Panc1 (cell line): ENCODE measurements at regions of chr10 and their contacts with region 1.

Region 1: GRCh38 chr10:21525367-21526183 is at the start of gene SKIDA1:
- DNase-seq: no peak
- ATAC-seq: peak; percentile 77
- H3K4me3 ChIP-seq: peak within 1 kb of the TSS; percentile 48 to 78
- H3K27ac ChIP-seq: peak within 1 kb of the TSS; percentile 97
- H3K4me1 ChIP-seq: peaks cover 44% of the 10 kb centered on the region
- H3K27me3 ChIP-seq: no peaks in the 10 kb centered on the region
- CTCF ChIP-seq: no peak
- total RNA-seq, gene SKIDA1: 9.3 TPM

Region 2: GRCh38 chr10:21030091-21030490 is 495.5 kb before region 1 on chr10:
- CTCF ChIA-PET with region 1: no interaction called
- POLR2A ChIA-PET with region 1: interaction called, 17 read pairs
- in situ Hi-C with region 1: no loop called
- intact Hi-C with region 1: no loop called
- DNase-seq: no peak
- ATAC-seq: no peak
- H3K4me3 ChIP-seq: no peak overlapping the region
- H3K27ac ChIP-seq: no peak overlapping the region
- H3K4me1 ChIP-seq: no peaks in the 10 kb centered on the region
- H3K27me3 ChIP-seq: no peaks in the 10 kb centered on the region
- CTCF ChIP-seq: no peak